ENCODE measurements at regions of chr20 and their contacts with region 1.

Region 1: GRCh38 chr20:47785854-47786764 is 828 bp upstream of the SULF2 start:
- DNase-seq: peak; percentile 84
- H3K4me3 ChIP-seq: peak overlapping the region; percentile 75
- H3K27ac ChIP-seq: no peak overlapping the region
- H3K4me1 ChIP-seq: peaks cover 7% of the 10 kb centered on the region
- H3K27me3 ChIP-seq: peaks cover 55% of the 10 kb centered on the region

Region 2: DNA sequence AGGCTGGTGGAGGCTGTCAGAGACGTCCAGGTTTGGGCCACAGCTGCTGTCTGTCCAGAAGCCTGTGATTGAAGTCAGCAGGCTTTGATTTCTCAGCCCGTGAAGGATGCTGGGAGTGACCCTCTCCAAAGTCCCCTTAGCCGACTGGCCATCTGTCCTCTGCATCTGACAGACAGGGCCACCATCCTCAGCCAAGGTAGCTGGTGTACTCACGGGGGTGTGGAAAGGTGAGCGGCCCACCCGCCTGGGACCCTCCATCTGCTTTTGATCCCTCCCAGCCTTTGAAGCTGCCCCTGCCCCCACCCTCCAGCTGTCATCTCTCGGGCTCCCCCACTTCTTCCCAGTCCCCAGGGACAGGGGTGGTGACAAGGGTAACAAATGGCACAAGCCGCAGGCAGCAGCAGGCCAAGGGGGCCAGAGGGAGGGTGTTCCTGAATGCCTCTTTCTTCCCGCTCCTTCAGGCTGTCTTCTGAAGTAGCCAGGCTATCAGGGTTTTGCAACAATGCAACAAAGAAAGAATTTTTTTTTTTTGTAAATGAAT is 807.1 kb before region 1 on chr20:
- in situ Hi-C with region 1: no loop called
- DNase-seq: no peak
- H3K4me3 ChIP-seq: no peak overlapping the region
- H3K27ac ChIP-seq: no peak overlapping the region
- H3K4me1 ChIP-seq: no peaks in the 10 kb centered on the region
- H3K27me3 ChIP-seq: peaks cover 19% of the 10 kb centered on the region

Region 3: GRCh38 chr20:47606414-47606982 is 179.6 kb before region 1 on chr20:
- in situ Hi-C with region 1: no loop called
- DNase-seq: no peak
- H3K4me3 ChIP-seq: no peak overlapping the region
- H3K27ac ChIP-seq: peak overlapping the region; percentile 48; the same call in 1 of the 2 replicates
- H3K4me1 ChIP-seq: peaks cover 37% of the 10 kb centered on the region
- H3K27me3 ChIP-seq: no peaks in the 10 kb centered on the region

Region 4: GRCh38 chr20:48002227-48002970 is 216.3 kb after region 1 on chr20:
- in situ Hi-C with region 1: no loop called
- DNase-seq: no peak
- H3K4me3 ChIP-seq: no peak overlapping the region
- H3K27ac ChIP-seq: no peak overlapping the region
- H3K4me1 ChIP-seq: peaks cover 4% of the 10 kb centered on the region; the same call in 1 of the 2 replicates
- H3K27me3 ChIP-seq: no peaks in the 10 kb centered on the region

Region 5: DNA sequence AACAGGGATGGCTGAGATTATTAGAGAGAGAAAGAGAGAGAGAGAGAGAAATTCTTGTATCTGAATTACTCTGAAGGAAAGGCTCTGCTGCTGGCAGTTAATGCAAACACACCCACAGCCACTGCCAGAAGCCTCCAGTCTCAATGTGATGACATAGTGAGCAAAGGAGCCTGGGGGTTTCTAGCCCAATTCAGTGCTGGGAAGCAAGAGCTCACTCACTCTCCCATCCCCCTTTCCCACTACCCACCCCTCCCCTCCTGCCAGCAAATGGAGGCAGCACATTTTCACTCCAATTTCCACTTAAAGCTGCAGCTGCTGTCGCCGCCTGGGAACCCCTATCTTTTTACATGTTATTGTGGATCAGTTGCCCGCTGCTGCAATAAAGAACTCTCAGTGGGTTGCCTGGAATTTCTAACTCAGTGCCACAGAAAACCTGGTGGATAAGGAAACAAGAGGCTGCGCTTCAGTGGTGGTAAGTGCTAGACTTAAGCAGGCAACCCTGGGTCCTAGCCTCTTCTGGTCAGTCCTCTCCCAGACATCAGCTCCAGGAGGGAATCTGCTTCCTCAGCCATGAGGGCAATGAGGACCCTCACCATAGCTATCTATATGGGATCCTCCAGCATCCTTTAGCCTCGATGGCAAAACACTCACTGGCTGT is 489.7 kb after region 1 on chr20:
- in situ Hi-C with region 1: no loop called
- DNase-seq: no peak
- H3K4me3 ChIP-seq: no peak overlapping the region
- H3K27ac ChIP-seq: no peak overlapping the region
- H3K4me1 ChIP-seq: no peaks in the 10 kb centered on the region
- H3K27me3 ChIP-seq: peaks cover 26% of the 10 kb centered on the region

Region 6: DNA sequence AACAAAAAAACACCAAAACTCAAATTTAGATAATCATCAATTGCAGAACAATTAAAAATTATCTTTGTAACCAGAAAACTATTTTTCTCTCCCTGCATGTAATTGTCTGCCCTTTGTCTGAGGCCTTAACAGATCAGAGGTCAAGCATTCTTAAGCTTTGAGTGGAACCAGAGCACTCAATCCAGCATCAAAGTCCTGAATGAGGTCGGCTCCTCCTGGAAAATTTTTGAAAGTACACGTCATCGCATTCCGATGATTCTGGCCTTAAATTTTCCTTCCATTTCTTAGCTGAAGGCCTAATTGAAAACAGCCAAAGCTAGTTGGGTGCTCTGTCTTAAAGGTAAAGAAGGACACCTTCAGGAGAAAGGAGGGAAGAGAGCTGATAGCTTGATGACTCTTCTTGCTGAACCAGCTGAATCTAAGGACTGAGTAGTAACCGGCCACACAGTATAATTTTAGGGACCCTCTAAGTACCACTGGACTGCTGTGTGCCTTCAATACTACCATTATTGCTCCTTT is 509.4 kb after region 1 on chr20:
- in situ Hi-C with region 1: loop called (anchors 10 kb)
- DNase-seq: peak; percentile 91
- H3K4me3 ChIP-seq: peak overlapping the region; percentile 34
- H3K27ac ChIP-seq: peak overlapping the region; percentile 52
- H3K4me1 ChIP-seq: peaks cover 35% of the 10 kb centered on the region
- H3K27me3 ChIP-seq: peaks cover 15% of the 10 kb centered on the region

Measured in GM23248 (cell line).